ENCODE measurements at regions of chr3 and their contacts with region 1.

Region 1: GRCh38 chr3:1214933-1215332 is 122.1 kb downstream of the CNTN6 start:
- DNase-seq: no peak
- H3K4me3 ChIP-seq: no peak overlapping the region
- CTCF ChIP-seq: no peak
- POLR2A ChIP-seq: no peak

Region 2: GRCh38 chr3:1147819-1148218 is 67.1 kb before region 1 on chr3:
- intact Hi-C with region 1: loop called (anchors 2 kb)
- DNase-seq: no peak
- H3K4me3 ChIP-seq: no peak overlapping the region
- CTCF ChIP-seq: no peak
- POLR2A ChIP-seq: no peak

Region 3: DNA sequence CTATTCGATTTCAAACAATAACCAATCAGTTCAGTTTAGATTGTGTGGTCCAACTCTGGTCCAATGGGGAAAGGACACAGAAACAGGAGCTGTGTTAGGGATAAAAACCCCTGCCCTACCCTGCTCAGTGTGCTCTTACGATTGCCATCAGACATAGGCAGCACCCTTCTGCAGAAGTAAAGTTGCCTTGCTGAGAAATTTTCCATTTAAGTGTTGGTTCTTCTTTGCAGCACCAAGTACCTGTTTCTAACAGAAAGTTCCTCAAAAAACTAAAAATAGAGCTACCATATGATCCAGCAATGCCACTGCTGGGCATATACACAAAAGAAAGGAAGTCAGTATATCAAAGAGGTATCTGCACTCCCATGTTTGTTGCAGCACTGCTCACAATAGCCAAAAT is 677.5 kb after region 1 on chr3:
- intact Hi-C with region 1: no loop called
- DNase-seq: no peak
- H3K4me3 ChIP-seq: no peak overlapping the region
- CTCF ChIP-seq: no peak
- POLR2A ChIP-seq: no peak

Region 4: GRCh38 chr3:2041931-2042330 is 827.0 kb after region 1 on chr3:
- intact Hi-C with region 1: no loop called
- DNase-seq: no peak
- H3K4me3 ChIP-seq: no peak overlapping the region
- CTCF ChIP-seq: no peak
- POLR2A ChIP-seq: no peak